Naive thymus-derived CD4-positive, alpha-beta T cell (primary cell): ENCODE measurements at regions of chr10 and their contacts with region 1.

Region 1: GRCh38 chr10:6401562-6402348 is 178.3 kb downstream of the PRKCQ start:
- DNase-seq: peak in 8 of 9 donors; percentile 49 to 74 (median 66)
- ATAC-seq: peak; percentile 87
- H3K4me3 ChIP-seq: no peak overlapping the region
- H3K4me3 Mint-ChIP-seq: peak overlapping the region in 9 of 10 donors; percentile 0 to 49 (median 38)
- H3K27ac ChIP-seq: no peak overlapping the region
- H3K27ac Mint-ChIP-seq: peak overlapping the region in 8 of 9 donors; percentile 4 to 82 (median 56)
- H3K4me1 ChIP-seq: peaks cover 0 to 11% of the 10 kb centered on the region in 2 donors
- H3K4me1 Mint-ChIP-seq: peaks cover 4 to 33% (median 18%) of the 10 kb centered on the region in 7 donors
- H3K27me3 ChIP-seq: no peaks in the 10 kb centered on the region
- H3K27me3 Mint-ChIP-seq: peaks cover 0 to 13% (median 0%) of the 10 kb centered on the region in 5 donors

Region 2: DNA sequence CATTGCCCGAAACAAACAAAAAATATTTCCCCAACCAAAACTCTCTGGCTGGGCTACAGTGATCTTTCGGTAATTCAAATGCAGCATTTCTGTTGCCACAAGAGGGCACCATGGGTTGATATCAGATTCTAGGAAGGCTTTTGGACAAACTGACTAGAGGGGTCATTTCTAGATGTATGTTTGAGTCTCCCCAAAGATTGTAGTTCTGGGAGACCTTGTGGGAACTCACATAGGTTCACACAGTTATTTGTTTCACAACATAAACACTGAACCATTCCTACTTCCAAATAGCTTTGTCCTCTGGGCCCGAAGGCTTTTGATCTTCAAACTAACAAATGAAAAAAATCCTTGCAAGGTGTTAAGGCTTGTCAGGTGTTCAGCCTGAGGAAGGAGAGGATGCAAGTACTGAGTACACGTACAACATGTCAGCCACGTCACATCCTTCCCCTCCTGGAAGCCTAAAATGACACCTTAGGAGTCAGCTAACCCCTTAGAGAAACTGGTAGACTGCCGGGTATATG is 387.5 kb before region 1 on chr10:
- CTCF ChIA-PET with region 1: interaction called, 19 read pairs
- POLR2A ChIA-PET with region 1: interaction called, 3 read pairs
- intact Hi-C with region 1: loop called (anchors 1 to 5 kb)
- DNase-seq: peak in 7 of 9 donors; percentile 73 to 89 (median 86)
- ATAC-seq: peak; percentile 98
- H3K4me3 ChIP-seq: no peak overlapping the region
- H3K4me3 Mint-ChIP-seq: peak overlapping the region in 9 of 10 donors; percentile 5 to 61 (median 36)
- H3K27ac ChIP-seq: peak overlapping the region; percentile 82
- H3K27ac Mint-ChIP-seq: peak overlapping the region; percentile 85 to 99 (median 96)
- H3K4me1 ChIP-seq: peaks cover 9 to 15% of the 10 kb centered on the region in 2 donors
- H3K4me1 Mint-ChIP-seq: peaks cover 3 to 55% (median 25%) of the 10 kb centered on the region in 7 donors
- H3K27me3 ChIP-seq: no peaks in the 10 kb centered on the region
- H3K27me3 Mint-ChIP-seq: no peaks in the 10 kb centered on the region

Region 3: GRCh38 chr10:6136215-6137201 is 265.2 kb before region 1 on chr10:
- CTCF ChIA-PET with region 1: interaction called, 10 read pairs
- POLR2A ChIA-PET with region 1: interaction called, 4 read pairs
- intact Hi-C with region 1: no loop called
- DNase-seq: peak in 1 of 9 donors; percentile 68
- ATAC-seq: peak; percentile 12
- H3K4me3 ChIP-seq: no peak overlapping the region
- H3K4me3 Mint-ChIP-seq: peak overlapping the region in 1 of 10 donors; percentile 57
- H3K27ac ChIP-seq: no peak overlapping the region
- H3K27ac Mint-ChIP-seq: peak overlapping the region in 3 of 9 donors; percentile 11 to 63 (median 16)
- H3K4me1 ChIP-seq: peaks cover 9 to 17% of the 10 kb centered on the region in 2 donors
- H3K4me1 Mint-ChIP-seq: peaks cover 21 to 61% (median 24%) of the 10 kb centered on the region in 7 donors
- H3K27me3 ChIP-seq: no peaks in the 10 kb centered on the region
- H3K27me3 Mint-ChIP-seq: peaks cover 0 to 17% (median 0%) of the 10 kb centered on the region in 5 donors

Region 4: DNA sequence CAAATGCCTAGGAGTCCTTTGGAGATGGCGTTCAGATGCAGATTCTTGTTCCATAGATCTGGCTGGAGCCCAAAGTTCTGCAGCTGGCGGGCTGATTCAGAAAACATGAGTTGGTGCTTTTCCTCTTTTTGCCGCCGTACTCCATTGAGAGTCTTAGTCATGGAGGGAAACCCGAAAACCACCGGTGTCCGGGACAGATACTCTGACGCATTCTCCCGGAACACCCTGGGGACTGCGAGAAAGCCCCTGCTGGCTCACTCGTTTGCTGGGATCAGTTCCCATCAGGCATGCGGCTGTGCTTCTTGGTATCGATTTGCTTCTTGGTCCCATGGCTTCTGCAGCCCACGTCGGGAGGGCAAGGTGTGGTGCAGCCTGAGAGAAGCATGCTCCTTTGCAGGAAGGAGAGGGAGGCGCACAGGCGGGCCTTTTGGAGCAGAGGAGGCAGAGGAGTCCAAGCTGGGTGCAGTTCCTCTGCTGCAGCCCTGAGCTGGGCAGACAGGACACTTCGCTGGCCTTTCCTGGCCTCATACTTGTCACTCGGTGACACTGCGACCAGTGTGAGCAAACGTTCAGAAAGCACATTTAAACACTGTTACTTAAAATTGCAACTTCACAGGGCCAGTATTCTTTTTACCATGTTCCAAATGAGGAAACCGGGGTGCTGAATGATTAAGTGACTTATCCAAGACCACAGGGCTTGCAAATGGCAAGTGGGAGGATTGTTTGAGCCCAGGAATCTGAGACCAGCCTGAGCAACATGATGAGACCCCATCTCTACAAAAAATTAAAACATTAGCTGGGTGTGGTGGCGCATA is 229.7 kb before region 1 on chr10:
- CTCF ChIA-PET with region 1: interaction called, 22 read pairs
- POLR2A ChIA-PET with region 1: interaction called, 4 read pairs
- intact Hi-C with region 1: loop called (anchors 1 kb)
- DNase-seq: peak in 1 of 9 donors; percentile 54
- ATAC-seq: peak; percentile 75
- H3K4me3 ChIP-seq: no peak overlapping the region
- H3K4me3 Mint-ChIP-seq: peak overlapping the region in 9 of 10 donors; percentile 21 to 74 (median 43)
- H3K27ac ChIP-seq: peak overlapping the region; percentile 3
- H3K27ac Mint-ChIP-seq: peak overlapping the region; percentile 65 to 94 (median 89)
- H3K4me1 ChIP-seq: peaks cover 9 to 46% of the 10 kb centered on the region in 2 donors
- H3K4me1 Mint-ChIP-seq: peaks cover 67 to 94% (median 88%) of the 10 kb centered on the region in 7 donors
- H3K27me3 ChIP-seq: no peaks in the 10 kb centered on the region
- H3K27me3 Mint-ChIP-seq: no peaks in the 10 kb centered on the region

Region 5: GRCh38 chr10:6292741-6293151 is 109.0 kb before region 1 on chr10:
- CTCF ChIA-PET with region 1: interaction called, 3 read pairs
- POLR2A ChIA-PET with region 1: interaction called, 3 read pairs
- intact Hi-C with region 1: loop called (anchors 5 kb)
- DNase-seq: no peak
- ATAC-seq: no peak
- H3K4me3 ChIP-seq: no peak overlapping the region
- H3K4me3 Mint-ChIP-seq: peak overlapping the region in 2 of 10 donors; percentile 6 to 26
- H3K27ac ChIP-seq: no peak overlapping the region
- H3K27ac Mint-ChIP-seq: peak overlapping the region in 7 of 9 donors; percentile 10 to 72 (median 34)
- H3K4me1 ChIP-seq: peaks cover 6 to 8% of the 10 kb centered on the region in 2 donors
- H3K4me1 Mint-ChIP-seq: peaks cover 4 to 55% (median 32%) of the 10 kb centered on the region in 7 donors
- H3K27me3 ChIP-seq: no peaks in the 10 kb centered on the region
- H3K27me3 Mint-ChIP-seq: no peaks in the 10 kb centered on the region

Region 6: GRCh38 chr10:6382081-6382480 is 19.7 kb before region 1 on chr10:
- CTCF ChIA-PET with region 1: interaction called, 4 read pairs
- POLR2A ChIA-PET with region 1: interaction called, 6 read pairs
- intact Hi-C with region 1: loop called in 1 of 2 experiments (anchors 1 kb)
- DNase-seq: peak in 7 of 9 donors; percentile 40 to 63 (median 53)
- ATAC-seq: peak; percentile 53
- H3K4me3 ChIP-seq: peak overlapping the region; percentile 30
- H3K4me3 Mint-ChIP-seq: peak overlapping the region; percentile 52 to 84 (median 72)
- H3K27ac ChIP-seq: no peak overlapping the region
- H3K27ac Mint-ChIP-seq: peak overlapping the region; percentile 9 to 86 (median 76)
- H3K4me1 ChIP-seq: peaks cover 0 to 17% of the 10 kb centered on the region in 2 donors
- H3K4me1 Mint-ChIP-seq: peaks cover 11 to 27% (median 20%) of the 10 kb centered on the region in 7 donors
- H3K27me3 ChIP-seq: no peaks in the 10 kb centered on the region
- H3K27me3 Mint-ChIP-seq: no peaks in the 10 kb centered on the region